ENCODE measurements at regions of chr12 and their contacts with region 1.

Region 1: GRCh38 chr12:49776413-49776812 is 35.1 kb downstream of the TMBIM6 start:
- DNase-seq: peak; percentile 78
- ATAC-seq: peak; percentile 85
- H3K4me3 Mint-ChIP-seq: no peak overlapping the region
- H3K27ac Mint-ChIP-seq: peak overlapping the region; percentile 48
- H3K4me1 Mint-ChIP-seq: peaks cover 20% of the 10 kb centered on the region
- H3K27me3 Mint-ChIP-seq: peaks cover 20% of the 10 kb centered on the region

Region 2: DNA sequence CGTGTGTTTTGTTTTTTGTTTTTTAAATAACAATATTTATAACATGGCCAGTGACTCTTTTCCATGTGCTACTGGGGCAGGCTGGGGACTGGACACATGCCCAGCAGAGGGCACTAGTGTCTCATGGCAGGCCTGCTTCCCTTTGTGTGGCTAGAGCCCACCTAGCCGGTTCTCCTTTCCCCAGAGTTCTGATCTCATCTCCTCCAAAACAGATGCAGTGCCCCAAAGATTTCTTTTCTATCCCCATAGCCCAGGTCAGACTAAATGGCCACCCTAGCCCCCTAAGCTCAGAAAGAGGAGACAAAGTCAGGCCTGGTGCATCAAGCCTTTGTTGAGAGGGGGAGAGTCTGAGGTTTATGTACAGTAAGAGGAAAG is 131.8 kb before region 1 on chr12:
- CTCF ChIA-PET with region 1: interaction called, 27 read pairs
- POLR2A ChIA-PET with region 1: interaction called, 7 read pairs
- DNase-seq: peak; percentile 89
- ATAC-seq: peak; percentile 96
- H3K4me3 Mint-ChIP-seq: no peak overlapping the region
- H3K27ac Mint-ChIP-seq: peak overlapping the region; percentile 87
- H3K4me1 Mint-ChIP-seq: peaks cover 41% of the 10 kb centered on the region
- H3K27me3 Mint-ChIP-seq: no peaks in the 10 kb centered on the region

Region 3: DNA sequence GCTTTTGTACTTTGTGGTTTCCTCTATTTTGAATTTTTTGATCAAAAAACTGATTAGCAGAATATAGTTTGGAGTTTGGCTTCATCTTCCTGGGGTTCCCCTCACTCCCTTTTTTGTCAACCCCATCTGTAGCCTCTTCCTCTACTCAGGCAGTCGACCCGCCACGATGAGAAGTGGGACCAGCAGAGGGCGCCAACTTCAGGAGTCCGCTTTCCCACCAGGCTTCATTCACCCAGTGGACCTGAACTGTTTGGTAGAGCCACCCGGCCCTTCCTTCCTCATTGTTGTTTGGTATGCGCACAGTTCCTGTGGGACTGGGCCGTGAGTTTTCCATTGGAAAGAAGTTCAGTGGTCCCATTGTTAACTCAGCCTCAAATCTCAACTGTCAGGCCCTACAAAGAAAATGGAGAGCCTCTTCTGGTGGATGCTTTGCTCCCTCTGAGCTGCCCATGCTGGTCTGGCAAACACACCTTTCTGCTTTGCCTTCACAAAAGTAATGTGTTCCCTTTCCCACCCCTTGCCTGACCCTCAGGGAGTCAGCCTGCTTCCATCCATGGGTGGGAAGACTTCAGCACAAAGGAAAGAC is 13.3 kb before region 1 on chr12:
- CTCF ChIA-PET with region 1: interaction called, 63 read pairs
- POLR2A ChIA-PET with region 1: no interaction called
- DNase-seq: peak; percentile 85
- ATAC-seq: peak; percentile 74
- H3K4me3 Mint-ChIP-seq: peak overlapping the region; percentile 42
- H3K27ac Mint-ChIP-seq: peak overlapping the region; percentile 94
- H3K4me1 Mint-ChIP-seq: peaks cover 60% of the 10 kb centered on the region
- H3K27me3 Mint-ChIP-seq: no peaks in the 10 kb centered on the region

Region 4: GRCh38 chr12:49809906-49810389 is 33.5 kb after region 1 on chr12:
- CTCF ChIA-PET with region 1: interaction called, 17 read pairs
- POLR2A ChIA-PET with region 1: no interaction called
- DNase-seq: no peak
- ATAC-seq: no peak
- H3K4me3 Mint-ChIP-seq: no peak overlapping the region
- H3K27ac Mint-ChIP-seq: peak overlapping the region; percentile 55
- H3K4me1 Mint-ChIP-seq: peaks cover 13% of the 10 kb centered on the region
- H3K27me3 Mint-ChIP-seq: no peaks in the 10 kb centered on the region

Region 5: DNA sequence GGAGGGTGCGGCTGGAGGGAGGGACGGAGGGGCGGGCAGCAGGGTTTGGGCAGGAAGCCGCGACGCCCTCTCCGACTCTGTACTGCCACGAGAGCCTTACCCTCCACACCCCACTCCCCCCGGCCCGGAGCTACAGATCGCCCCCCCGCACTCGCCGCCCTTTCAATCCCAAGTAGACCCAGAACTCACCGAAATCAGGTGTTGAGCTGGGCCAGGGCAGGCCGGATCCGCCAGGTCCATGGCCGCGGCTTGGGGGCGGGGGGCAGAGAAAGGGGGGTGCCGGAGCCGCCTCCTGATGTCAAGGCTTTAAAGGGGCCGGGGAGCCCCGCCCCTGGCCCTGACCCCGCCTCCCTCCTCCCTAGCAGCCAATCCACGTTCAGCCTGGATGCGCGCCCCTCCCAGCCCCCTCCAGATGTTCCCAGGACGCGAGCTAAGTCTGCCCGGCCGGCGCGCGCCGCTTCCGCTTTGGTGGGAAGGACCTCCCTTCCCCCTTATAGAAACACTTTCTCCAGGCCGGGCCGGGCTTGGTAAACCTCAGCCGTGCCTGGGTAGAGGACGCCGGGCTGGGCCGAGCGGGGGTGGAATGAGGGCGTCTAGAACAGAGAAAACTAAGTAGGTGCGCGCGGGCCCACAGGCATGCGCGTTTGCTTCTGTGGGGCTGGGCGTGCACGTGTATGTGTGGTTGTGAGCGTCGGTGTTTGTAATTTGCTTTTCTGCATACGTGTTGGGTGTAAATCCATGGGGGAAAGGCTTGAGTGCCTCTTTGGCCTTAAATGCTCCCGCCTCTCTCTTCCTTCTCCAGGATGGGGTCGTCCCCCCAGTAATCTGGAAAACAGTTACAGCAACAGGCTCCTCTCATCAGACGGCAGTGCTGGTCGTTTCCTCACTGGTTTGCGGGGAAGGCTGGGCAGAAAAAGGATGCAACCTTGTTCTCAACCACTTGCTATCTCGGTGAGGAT is 52.0 kb after region 1 on chr12 and contains the start of gene NCKAP5L:
- CTCF ChIA-PET with region 1: interaction called, 34 read pairs
- POLR2A ChIA-PET with region 1: no interaction called
- DNase-seq: peak; percentile 96
- ATAC-seq: peak; percentile 97
- H3K4me3 Mint-ChIP-seq: peak within 1 kb of the TSS; percentile 94
- H3K27ac Mint-ChIP-seq: peak within 1 kb of the TSS; percentile 94
- H3K4me1 Mint-ChIP-seq: peaks cover 27% of the 10 kb centered on the region
- H3K27me3 Mint-ChIP-seq: no peaks in the 10 kb centered on the region
- total RNA-seq, gene NCKAP5L: 7.2 to 7.7 TPM

Measured in activated CD8-positive, alpha-beta T cell treated with anti-CD3 and anti-CD28 coated beads, Interleukin-2, amount 10 ng/mL, durations not matched to agents 7 days and 5 days (primary cell).